ENCODE measurements at regions of chr12 and their contacts with region 1.

Region 1: GRCh38 chr12:51886021-51886322 is 1.9 kb upstream of the ANKRD33 start:
- DNase-seq: peak; percentile 55 to 58
- ATAC-seq: peak; percentile 45 to 55; a peak in 5 of 6 replicates
- H3K4me3 ChIP-seq: no peak overlapping the region
- H3K27ac ChIP-seq: no peak overlapping the region
- H3K4me1 ChIP-seq: no peaks in the 10 kb centered on the region
- CTCF ChIP-seq: no peak
- EP300 ChIP-seq: no peak
- POLR2A ChIP-seq: no peak
- RAD21 ChIP-seq: no peak

Region 2: DNA sequence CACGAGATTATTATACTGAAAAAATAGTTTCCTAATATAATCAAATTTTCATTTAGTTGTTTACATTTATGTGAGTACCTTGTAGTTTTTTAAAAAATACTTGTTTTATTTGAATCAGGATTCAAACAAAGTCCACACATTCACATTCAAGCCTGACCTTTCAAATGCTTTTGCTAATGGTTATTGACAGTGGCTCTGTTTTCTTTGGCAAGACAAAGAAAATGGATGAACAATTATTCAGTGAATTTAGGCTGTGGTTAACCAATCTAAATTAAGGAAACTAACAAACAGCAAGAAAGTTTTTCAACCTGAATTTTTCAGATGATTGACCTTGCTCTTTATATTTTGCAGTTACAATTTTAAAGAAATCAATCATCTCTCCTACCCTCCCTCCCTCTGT is 451.7 kb before region 1 on chr12:
- CTCF ChIA-PET with region 1: no interaction called
- POLR2A ChIA-PET with region 1: no interaction called
- DNase-seq: no peak
- ATAC-seq: no peak
- H3K4me3 ChIP-seq: no peak overlapping the region
- H3K27ac ChIP-seq: no peak overlapping the region
- H3K4me1 ChIP-seq: 0 out of 3 replicates have a peak, but pooled peaks cover 7% of the 10 kb centered on the region
- CTCF ChIP-seq: no peak
- EP300 ChIP-seq: no peak
- POLR2A ChIP-seq: no peak
- RAD21 ChIP-seq: no peak

Region 3: DNA sequence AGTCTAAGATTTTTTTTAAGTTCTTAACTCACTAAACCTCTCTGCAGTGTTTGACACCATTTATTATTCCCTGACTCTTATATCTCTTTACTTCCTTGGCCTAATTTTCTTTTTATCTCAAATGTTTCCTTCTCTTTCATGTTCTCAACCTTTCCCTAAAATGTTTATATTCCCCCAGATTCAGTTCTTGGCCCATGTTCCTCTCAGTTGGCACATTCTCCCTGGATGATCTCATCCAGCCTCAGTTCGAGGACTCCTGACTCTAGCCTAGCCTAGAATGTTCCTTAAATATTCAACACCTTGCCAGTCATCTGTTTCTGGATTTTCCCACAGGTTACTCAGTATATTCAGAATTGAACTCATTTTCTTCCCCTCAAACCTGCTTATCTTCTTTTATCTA is 213.6 kb before region 1 on chr12:
- CTCF ChIA-PET with region 1: no interaction called
- POLR2A ChIA-PET with region 1: no interaction called
- DNase-seq: no peak
- ATAC-seq: no peak
- H3K4me3 ChIP-seq: no peak overlapping the region
- H3K27ac ChIP-seq: no peak overlapping the region
- H3K4me1 ChIP-seq: no peaks in the 10 kb centered on the region
- CTCF ChIP-seq: no peak
- EP300 ChIP-seq: no peak
- POLR2A ChIP-seq: no peak
- RAD21 ChIP-seq: no peak

Region 4: DNA sequence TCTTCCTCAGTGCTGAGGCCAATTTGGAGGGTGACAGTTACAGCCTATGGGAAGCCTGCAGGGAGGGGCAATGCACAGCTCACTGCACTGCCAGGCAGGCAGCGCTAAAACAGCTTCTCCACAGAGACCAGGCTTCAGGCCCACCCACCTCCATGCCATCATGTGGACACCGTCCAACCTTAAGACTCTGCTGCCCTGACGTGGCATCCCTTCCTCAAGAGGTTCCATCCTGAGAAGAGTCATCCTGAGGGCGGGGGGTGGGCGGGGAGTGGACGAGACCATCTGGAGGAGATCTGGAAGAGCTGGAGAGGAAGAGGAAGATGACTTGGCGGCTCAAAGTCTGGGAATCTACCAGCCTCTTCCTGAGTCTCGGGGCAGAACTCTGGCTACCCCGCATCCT is 13.0 kb after region 1 on chr12:
- CTCF ChIA-PET with region 1: interaction called, 14 read pairs
- POLR2A ChIA-PET with region 1: no interaction called
- DNase-seq: no peak
- ATAC-seq: no peak
- H3K4me3 ChIP-seq: no peak overlapping the region
- H3K27ac ChIP-seq: no peak overlapping the region
- H3K4me1 ChIP-seq: no peaks in the 10 kb centered on the region
- CTCF ChIP-seq: no peak
- EP300 ChIP-seq: no peak
- POLR2A ChIP-seq: no peak
- RAD21 ChIP-seq: no peak

Region 5: DNA sequence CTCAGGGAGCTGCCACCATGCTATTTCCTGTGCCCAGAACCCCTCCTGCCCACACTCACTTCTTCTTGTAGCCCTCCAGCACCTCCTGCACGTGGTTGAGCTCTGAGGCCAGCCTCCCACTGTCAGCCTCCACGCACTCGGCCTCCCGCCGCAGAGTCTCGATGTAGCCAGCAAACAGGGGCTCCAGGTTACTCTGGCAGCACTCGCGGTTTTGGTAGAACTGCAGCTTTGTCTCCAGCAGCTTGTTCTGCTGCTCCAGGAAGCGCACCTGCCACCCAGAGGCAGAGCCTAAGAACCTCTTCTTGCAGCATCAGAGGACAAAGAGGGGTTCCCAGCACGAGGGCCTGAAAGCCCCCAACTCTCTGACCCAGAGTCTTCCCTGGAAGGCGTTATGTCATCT is 433.1 kb after region 1 on chr12:
- CTCF ChIA-PET with region 1: no interaction called
- POLR2A ChIA-PET with region 1: no interaction called
- DNase-seq: peak in 1 of 2 experiments; percentile 59
- ATAC-seq: peak in 1 of 2 experiments; percentile 51; a peak in 2 of 6 replicates
- H3K4me3 ChIP-seq: no peak overlapping the region
- H3K27ac ChIP-seq: peak overlapping the region; percentile 51 to 81
- H3K4me1 ChIP-seq: peaks cover 7% of the 10 kb centered on the region; the same call in 1 of the 3 replicates
- CTCF ChIP-seq: peak; percentile 29
- EP300 ChIP-seq: no peak
- POLR2A ChIP-seq: no peak
- RAD21 ChIP-seq: peak; percentile 52 to 57; a peak in 4 of 5 replicates